AG04449 (cell line): ENCODE measurements at regions of chr2 and their contacts with region 1.

Region 1: GRCh38 chr2:174688079-174688478 is 76.2 kb downstream of the CHRNA1 start:
- DNase-seq: no peak
- H3K4me3 ChIP-seq: no peak overlapping the region
- CTCF ChIP-seq: no peak

Region 2: DNA sequence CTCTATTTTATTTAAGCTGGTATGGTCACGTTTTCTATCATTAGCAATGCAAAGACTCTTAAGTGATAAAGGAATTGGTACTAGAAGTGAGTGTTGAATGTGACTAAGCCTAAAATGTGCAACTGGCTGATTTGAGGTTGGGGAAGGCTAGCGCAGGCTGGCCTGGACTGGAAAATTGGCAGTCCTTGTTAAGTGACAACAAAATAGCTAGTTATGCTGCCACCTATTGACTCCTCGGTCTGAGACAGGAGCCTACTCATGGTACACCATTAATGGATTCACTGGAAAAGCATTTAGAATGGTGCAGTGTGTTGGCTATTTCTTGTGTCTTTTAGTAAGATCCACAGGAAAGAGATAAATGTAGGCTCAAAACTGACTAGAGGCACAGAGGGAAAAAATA is 84.8 kb before region 1 on chr2:
- CTCF ChIA-PET with region 1: interaction called, 666 read pairs
- POLR2A ChIA-PET with region 1: no interaction called
- DNase-seq: no peak
- H3K4me3 ChIP-seq: no peak overlapping the region
- CTCF ChIP-seq: peak; percentile 26

Region 3: GRCh38 chr2:174624895-174625430 is 63.1 kb before region 1 on chr2:
- CTCF ChIA-PET with region 1: interaction called, 10 read pairs
- POLR2A ChIA-PET with region 1: no interaction called
- DNase-seq: no peak
- H3K4me3 ChIP-seq: no peak overlapping the region
- CTCF ChIP-seq: no peak

Region 4: DNA sequence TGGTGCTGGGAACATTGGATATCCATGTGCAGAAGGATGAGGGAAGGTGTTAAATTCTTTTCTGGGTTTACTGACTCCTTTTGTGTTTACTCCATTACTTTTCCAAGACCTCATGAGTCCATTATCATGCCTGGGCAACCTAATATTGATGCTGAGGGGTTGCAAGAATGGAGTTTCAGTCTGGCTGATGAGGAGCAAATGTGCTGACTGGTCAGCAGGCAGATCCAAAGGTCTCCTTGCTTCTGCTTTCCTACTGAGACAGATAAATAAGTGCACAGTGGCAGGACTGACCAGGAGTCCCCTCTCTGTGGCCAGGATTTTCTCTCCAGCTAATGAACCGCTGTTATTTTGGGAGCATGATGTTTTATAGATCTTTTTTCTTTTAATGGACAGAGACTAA is 46.9 kb before region 1 on chr2:
- CTCF ChIA-PET with region 1: no interaction called
- POLR2A ChIA-PET with region 1: no interaction called
- DNase-seq: no peak
- H3K4me3 ChIP-seq: no peak overlapping the region
- CTCF ChIP-seq: no peak

Region 5: GRCh38 chr2:174654419-174654941 is 33.6 kb before region 1 on chr2:
- CTCF ChIA-PET with region 1: interaction called, 12 read pairs
- POLR2A ChIA-PET with region 1: no interaction called
- DNase-seq: no peak
- H3K4me3 ChIP-seq: no peak overlapping the region
- CTCF ChIP-seq: no peak

Region 6: DNA sequence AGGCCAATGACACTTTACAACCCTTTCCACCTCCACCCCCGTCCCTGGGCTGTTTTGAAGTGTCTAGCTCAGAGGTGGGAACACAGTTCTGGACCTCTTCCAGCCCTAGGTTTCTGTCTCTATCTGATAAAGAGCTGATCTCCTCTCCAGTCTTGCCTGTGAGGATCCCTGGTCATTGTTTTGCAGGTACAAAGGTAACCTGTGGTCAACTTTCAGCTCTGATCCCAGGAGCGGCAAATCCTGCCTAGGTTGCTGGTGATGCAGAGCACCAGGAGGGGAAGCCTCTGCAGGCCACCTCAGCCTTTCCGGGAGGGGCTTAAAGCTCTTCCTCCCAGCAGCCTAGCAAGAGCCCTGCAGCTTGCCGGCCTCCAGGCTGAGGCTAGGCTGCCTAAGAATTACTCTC is 20.7 kb before region 1 on chr2:
- CTCF ChIA-PET with region 1: interaction called, 14 read pairs
- POLR2A ChIA-PET with region 1: no interaction called
- DNase-seq: no peak
- H3K4me3 ChIP-seq: no peak overlapping the region
- CTCF ChIP-seq: no peak

Region 7: GRCh38 chr2:174673876-174674275 is 14.2 kb before region 1 on chr2:
- CTCF ChIA-PET with region 1: interaction called, 44 read pairs
- POLR2A ChIA-PET with region 1: interaction called, 3 read pairs
- DNase-seq: no peak
- H3K4me3 ChIP-seq: no peak overlapping the region
- CTCF ChIP-seq: no peak